HEK293 (cell line): ENCODE measurements at regions of chr1 and their contacts with region 1.

Region 1: DNA sequence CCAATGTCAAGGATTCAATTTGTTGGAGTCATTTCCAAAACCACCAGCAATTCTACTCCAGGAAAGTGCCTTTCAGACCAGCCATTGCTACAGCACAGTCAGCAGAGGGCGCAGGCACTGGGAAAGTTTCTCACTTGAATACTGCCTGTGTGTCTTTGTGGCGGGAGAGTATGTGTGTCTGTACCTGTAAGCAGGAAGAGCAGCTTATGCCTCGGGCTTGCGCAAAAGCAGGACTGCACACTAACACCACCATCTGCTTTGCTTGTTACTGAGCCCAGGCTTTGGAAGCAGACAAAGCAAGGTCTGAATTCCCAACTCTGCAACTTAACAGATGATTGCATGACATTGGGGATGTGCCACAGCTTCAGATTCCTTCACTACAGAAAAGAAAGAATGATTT is 7.0 kb upstream of the CTSE start:
- H3K4me3 ChIP-seq: no peak overlapping the region
- H3K27ac ChIP-seq: no peak overlapping the region
- H3K4me1 ChIP-seq: no peaks in the 10 kb centered on the region
- CTCF ChIP-seq: peak; percentile 82

Region 2: DNA sequence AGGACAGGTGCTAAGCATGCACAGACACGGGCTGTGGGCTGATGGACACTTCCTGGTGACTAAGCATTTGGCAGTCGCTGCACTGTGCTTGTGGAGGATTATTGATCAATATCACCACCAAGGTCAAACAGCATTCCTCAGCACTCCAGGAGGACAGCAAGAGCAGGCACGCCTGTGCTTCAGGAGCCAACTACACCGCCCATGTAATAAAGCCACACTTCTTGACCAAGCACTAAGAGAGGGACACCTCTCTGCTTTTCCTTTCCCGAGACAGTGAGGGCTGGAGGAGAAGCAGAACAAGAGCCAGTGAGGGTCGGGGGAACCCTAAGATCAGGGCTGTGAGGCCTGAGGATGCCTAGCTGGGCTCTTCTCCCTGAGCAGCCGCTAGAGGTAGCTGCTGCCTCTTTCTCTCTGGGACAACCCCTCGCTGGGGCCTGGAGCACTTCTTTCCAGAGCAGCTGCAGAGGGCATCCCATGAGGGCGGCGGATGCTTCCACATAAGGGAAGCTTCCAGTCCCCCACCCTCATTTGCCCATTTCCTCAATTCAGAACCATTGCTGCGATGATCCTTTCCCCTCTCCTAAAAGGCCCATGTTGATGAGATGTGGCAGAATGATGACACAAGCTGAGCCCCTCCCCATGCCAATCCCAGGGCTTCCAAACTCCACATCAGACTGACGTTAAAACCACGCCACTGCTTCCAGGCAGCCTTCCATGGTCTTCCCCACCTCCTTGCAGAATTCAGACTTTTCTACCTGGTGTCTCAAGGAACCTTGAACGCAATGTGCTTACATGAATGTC is 46.6 kb before region 1 on chr1:
- CTCF ChIA-PET with region 1: interaction called, 28 read pairs
- POLR2A ChIA-PET with region 1: no interaction called
- H3K4me3 ChIP-seq: no peak overlapping the region
- H3K27ac ChIP-seq: no peak overlapping the region
- H3K4me1 ChIP-seq: no peaks in the 10 kb centered on the region
- CTCF ChIP-seq: peak; percentile 51; the same call in 1 of the 2 replicates

Region 3: DNA sequence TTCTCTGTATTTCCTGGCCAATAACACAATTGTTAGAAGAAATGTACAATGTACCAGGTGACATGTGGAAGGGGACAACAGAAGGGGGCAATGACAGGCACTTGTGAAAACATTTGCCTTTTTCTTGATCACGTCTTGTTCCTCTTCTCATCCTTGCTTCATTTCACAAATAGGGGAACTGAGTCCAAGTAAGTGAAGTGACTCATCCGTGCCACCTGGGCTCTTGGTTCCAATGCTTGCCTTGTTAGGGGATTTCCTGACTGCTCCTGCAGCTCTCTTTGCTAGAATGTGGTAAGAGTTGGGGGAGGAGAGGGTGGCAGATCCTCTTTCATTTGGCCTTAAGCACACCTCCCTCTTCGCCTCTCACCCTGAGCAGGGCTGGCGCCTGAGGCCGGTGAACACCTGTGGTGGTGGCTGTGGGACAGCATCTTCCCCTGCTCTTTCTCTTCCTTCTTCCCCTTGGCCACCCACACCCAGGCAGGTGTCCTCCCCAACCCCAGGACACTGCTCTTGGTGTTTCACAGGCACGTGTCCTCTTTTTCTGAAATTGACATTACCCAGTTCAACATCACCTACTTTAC is 20.0 kb after region 1 on chr1:
- CTCF ChIA-PET with region 1: interaction called, 14 read pairs
- POLR2A ChIA-PET with region 1: no interaction called
- H3K4me3 ChIP-seq: no peak overlapping the region
- H3K27ac ChIP-seq: no peak overlapping the region
- H3K4me1 ChIP-seq: no peaks in the 10 kb centered on the region
- CTCF ChIP-seq: no peak

Region 4: GRCh38 chr1:206106328-206107167 is 75.8 kb after region 1 on chr1:
- CTCF ChIA-PET with region 1: interaction called, 144 read pairs
- POLR2A ChIA-PET with region 1: no interaction called
- H3K4me3 ChIP-seq: no peak overlapping the region
- H3K27ac ChIP-seq: no peak overlapping the region
- H3K4me1 ChIP-seq: no peaks in the 10 kb centered on the region
- CTCF ChIP-seq: peak; percentile 81